Left cardiac atrium (tissue), 4 donors: ENCODE measurements at regions of chr15 and their contacts with region 1.

Region 1: DNA sequence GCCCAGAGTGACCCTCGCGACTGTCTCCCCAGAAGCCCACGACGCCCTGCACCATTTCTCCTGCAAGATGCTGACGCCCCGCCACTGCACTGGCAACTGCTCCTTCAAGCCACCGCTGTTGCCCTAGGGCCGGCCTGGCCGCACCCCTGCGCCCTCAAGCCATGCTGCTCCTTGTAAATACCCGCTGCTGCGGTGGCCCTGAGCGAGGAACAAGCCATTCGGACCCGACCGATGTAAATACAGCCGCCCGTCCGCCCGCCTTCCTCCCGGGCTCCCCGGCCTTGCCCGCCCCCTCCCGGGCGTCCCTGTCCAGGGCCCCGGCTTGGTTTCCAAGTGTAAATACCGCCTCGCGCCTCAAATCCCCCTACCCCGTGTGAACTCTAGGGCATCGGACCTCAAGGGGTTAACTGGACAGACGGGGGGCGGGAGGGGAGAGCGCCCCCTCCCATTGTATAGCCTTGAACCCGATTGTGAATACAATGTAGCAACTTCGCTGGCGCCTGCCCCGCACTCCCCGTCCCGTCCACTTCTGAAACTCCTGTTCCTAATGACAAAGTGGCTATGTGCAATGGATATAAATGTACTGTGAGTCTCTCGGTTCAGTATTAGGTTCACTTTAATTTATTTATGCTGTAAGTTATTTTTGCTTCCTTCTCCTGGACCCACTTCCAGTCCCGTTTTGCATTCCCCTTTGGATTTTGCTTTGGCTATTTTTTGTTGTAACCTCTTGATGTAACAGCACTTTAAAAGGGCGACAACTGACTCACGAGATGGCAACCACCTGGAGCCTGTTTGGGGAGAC is 5.9 kb downstream of the RNU6-1 start:
- DNase-seq: no peak
- ATAC-seq: peak in 1 of 2 donors; percentile 28

Region 2: DNA sequence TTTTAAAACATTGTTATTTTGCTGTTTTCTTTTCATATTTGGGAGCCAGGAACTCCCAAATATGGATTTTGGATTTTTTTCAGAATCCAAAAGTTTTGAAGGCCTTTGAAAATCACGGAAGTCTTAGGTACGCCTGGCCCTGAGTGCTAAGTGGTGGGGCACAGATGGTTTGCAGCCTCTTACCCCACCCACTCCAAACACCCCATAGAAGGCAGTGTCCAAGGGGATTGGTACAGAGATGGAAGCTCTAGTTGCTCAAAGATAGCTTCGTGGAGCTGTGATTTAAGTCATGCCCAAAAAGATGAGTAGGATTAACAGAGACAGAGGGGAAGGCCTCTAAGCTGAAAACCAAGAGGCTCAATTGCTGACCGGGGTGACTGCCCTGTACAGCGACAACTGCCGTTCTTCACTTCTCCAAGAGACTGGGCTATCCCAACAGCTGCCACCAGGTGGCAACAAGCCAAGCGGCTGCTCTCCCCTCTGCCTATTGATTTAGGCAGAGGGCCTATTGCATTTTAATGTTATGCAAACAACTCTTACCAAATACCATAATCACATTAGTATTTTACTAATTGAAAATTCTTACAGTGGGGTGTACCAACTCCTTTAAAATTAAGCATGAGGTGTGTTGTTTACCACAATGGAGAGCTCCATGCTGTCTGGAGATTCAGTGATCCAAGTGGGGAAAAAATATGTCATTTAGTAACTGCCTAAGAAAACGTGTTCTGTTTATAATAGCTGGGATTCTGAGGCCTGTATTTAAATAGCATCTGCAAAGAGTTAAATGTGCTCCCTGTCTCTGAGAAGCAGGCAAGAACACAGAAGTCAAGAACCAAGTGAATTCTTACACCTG is 377.0 kb before region 1 on chr15:
- intact Hi-C with region 1: loop called (anchors 2 to 5 kb)
- DNase-seq: peak; percentile 86
- ATAC-seq: peak; percentile 88

Region 3: DNA sequence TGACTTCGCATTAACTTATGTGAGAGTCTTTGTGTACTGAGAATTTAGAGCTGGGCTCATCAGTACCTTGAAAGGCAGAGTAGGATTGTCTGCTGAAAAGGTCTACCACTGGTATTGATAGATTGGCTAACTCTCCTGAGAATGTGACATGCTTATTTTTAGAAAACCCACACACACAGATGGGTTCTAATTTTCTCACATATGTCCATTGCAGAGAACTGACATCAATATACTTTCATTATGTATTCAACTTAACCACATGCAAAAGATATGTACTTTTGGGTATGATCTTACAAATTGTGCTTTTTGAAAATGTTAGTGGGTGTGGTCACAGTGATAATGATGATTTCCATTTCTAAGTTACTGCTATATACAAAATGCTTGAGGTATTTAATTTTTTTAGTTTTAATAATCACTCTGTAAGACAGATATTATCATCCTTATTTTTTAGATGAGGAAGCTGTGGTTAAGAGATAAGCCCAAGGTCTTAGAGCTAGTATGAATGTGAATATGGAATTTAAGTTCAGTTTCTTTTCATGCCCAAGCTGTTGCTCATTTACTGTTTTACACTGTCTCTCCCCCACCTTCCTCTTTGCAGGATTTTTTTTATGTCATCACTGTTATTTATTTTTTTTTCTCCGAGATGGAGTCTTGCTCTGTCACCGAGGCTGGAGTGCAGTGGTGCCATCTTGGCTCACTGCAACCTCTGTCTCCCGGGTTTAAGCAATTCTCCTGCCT is 269.1 kb before region 1 on chr15:
- intact Hi-C with region 1: no loop called
- DNase-seq: no peak
- ATAC-seq: no peak

Region 4: GRCh38 chr15:67731112-67731761 is 102.7 kb before region 1 on chr15:
- intact Hi-C with region 1: no loop called
- DNase-seq: no peak
- ATAC-seq: no peak

Region 5: DNA sequence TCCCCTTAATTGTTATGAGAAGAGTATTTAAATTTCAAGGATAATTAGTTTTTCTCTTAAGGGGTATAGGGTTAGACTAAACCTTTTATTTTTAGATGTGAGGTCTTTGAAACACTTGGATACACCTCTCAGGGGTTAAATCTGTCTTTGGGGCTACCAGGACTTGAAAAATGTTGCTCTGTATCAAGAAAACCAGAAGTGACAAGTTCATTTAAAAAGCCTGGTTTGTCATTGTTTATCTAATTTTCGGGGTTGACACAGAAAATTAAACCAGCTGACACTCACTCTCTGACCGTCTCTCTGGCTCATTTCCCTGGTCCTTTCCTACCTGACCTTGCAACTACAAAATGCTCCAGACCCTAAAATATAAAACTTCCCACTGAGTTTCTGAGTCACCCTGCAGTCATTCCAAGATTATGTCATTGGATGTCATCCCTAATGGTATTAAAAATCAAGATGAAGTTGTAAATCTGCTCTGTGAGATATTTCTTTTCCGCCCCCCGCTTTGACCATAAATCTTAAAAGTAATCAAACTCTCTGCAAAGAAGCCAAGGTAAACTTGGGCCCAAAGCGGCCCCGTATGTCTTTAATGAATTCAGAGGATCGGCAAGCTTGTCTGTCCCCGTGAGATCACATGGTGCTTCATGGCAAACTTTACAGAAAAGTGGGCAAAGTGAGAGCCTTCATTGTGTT is 41.5 kb before region 1 on chr15:
- intact Hi-C with region 1: no loop called
- DNase-seq: no peak
- ATAC-seq: no peak